ENCODE measurements at regions of chr3 and their contacts with region 1.

Region 1: DNA sequence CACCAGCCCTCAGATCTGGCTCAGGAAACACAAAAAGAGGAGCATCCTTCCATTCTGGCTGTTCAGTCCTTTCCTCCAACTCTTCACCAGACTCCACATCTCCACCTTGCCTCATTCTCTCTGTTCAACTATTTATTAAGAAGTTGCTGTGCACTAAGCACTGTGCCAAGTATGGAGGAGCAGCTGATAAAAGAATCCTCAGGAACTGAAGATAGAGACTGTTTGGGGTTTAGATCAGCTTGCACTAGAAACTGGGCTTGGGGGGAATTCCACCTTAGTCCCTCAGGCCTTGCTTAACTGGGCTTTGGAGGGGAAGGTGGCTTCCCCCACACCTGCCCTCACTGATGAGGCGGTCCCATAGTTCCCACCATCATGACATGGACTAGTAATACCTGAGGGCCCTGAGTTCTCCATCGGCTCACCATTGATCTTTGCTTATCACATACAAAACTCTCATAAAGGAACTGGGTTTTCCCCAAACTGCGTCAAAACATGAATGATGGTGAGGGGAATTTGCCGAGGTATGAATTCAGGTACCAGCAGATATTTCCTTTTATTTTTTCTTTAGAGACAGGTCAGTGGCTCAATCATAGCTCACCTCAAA is 1.7 kb upstream of the CCR8 start:
- DNase-seq: peak; percentile 75
- H3K4me3 Mint-ChIP-seq: peak overlapping the region; percentile 37
- H3K27ac Mint-ChIP-seq: peak overlapping the region; percentile 72
- H3K4me1 Mint-ChIP-seq: peaks cover 50% of the 10 kb centered on the region
- H3K27me3 Mint-ChIP-seq: no peaks in the 10 kb centered on the region

Region 2: DNA sequence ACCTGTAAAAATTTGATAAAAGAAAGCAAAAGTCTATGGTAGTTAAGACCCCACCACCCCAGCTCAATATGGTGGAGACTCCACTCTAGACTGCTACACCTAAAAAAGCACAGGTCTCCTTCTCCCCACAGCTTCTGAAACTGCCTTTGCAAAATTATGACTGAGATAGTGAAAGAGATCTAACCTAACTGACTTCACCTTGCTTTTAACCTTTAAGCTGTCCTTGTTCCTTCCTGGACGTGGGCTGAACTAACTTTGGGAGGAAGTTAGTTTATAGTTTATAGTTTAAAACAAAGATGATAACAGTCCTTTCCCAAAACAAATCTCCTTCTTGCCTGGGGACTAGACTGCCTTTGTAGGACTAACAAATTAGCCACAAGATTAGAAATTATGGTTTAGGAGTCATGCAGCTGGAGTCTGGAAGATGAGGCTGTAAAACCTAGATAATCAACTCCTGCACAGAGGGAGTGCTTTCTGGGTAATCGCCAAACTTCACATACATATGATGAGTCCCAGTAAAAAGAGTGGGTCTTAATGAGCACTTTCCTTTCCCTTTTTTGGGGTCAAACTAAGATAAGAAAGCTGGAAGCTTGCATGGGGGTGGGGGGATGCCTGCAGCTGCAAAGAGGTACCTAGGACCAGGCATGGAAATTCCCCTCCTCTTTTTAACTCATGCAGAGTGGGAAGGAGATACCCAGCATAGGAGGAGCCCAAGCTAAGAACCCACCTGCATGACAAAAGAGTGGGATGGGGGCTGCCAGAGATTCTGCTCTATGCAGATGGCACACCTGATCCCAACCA is 19.1 kb after region 1 on chr3:
- intact Hi-C with region 1: loop called (anchors 1 kb)
- DNase-seq: peak; percentile 70
- H3K4me3 Mint-ChIP-seq: peak overlapping the region; percentile 70
- H3K27ac Mint-ChIP-seq: peak overlapping the region; percentile 79
- H3K4me1 Mint-ChIP-seq: peaks cover 49% of the 10 kb centered on the region
- H3K27me3 Mint-ChIP-seq: no peaks in the 10 kb centered on the region

Region 3: DNA sequence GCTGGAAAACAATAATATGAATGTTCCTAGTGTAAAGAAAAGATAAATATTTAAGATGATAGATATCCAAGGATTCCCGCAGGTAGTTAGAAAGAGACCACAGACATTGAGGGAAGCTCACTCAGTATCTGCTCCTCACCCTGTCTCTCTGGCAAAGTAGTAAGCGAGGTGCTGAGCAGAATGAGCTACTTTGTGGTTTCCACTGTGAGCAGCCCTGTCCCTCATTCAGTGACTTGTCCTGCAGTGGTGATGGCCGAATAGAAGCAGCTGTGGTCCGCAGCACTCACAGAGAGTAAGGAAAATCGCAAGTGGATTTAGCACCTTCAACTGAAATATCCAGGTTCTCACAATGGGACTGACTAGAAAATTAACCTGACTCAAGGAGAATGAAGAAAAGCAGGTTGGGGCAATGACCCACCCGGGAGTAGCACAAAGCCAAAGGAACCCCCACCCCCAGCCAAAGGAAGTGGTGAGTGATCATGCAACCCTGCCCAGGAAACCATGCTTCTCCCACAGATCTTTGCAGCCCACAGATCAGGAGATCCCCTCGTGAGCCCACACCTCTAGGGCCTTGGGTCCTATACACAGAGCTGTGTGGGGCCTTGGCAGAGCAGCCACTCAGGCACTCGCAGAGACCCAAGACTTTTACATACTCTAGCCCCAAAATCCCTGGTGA is 33.5 kb after region 1 on chr3:
- intact Hi-C with region 1: loop called (anchors 1 kb)
- DNase-seq: peak; percentile 90
- H3K4me3 Mint-ChIP-seq: peak overlapping the region; percentile 80
- H3K27ac Mint-ChIP-seq: peak overlapping the region; percentile 93
- H3K4me1 Mint-ChIP-seq: peaks cover 63% of the 10 kb centered on the region
- H3K27me3 Mint-ChIP-seq: peaks cover 9% of the 10 kb centered on the region

Region 4: DNA sequence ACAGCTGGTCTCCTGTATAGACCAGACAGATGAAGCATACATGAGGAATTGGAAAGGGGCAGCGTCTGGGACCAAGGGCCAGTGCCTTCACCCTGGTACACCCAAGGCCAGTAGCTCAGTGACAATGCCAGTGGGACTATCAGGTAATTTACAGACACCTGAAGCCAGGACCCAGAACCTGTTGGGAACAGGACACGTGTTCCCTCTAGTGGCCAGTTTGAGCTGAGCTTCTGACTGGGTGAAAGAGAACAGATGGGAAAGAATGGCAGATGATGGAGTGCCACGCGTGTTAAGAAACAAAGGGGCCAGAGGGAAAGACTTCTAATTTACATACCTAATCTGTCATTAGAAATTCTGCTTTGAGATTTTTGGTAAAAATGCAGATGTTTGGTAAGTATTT is 50.2 kb after region 1 on chr3:
- intact Hi-C with region 1: loop called (anchors 1 kb)
- DNase-seq: peak; percentile 91
- H3K4me3 Mint-ChIP-seq: no peak overlapping the region
- H3K27ac Mint-ChIP-seq: no peak overlapping the region
- H3K4me1 Mint-ChIP-seq: peaks cover 18% of the 10 kb centered on the region
- H3K27me3 Mint-ChIP-seq: no peaks in the 10 kb centered on the region

Region 5: DNA sequence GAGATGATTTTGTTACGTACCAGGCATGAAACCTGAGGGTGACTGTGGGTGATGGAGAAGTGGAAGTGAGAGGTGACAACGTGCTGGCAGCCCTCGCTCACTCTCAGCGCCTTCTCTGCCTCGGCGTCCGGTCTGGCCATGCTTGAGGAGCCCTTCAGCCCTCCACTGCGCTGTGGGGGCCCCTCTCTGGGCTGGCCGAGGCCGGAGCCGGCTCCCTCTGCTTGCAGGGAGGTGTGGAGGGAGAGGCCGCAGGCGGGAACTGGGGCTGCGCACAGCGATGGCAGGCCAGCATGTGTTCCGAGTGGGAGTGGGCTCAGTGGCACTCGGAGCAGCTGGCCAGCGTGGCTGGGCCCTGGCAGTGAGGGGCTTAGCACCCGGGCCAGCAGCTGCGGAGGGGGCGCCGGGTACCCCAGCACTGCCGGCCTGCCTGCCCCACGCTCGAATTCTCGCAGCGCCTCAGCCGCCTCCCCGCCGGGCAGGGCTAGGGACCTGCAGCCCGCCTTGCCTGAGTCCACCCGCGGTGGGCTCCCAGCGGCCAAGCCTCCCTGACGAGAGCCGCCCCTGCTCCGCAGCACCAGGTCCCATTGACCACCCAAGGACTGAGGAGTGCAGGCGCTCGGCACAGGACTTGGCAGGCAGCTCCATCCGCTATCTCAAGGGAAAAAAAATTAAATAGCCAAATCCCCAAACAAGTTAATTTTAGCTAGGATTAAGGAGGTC is 451.8 kb after region 1 on chr3:
- intact Hi-C with region 1: no loop called
- DNase-seq: peak; percentile 50
- H3K4me3 Mint-ChIP-seq: no peak overlapping the region
- H3K27ac Mint-ChIP-seq: no peak overlapping the region
- H3K4me1 Mint-ChIP-seq: no peaks in the 10 kb centered on the region
- H3K27me3 Mint-ChIP-seq: no peaks in the 10 kb centered on the region